ENCODE measurements at regions of chr7 and their contacts with region 1.

Region 1: GRCh38 chr7:100889761-100890634 is 483 bp upstream of the UFSP1 start:
- DNase-seq: peak; percentile 93
- H3K4me3 Mint-ChIP-seq: peak overlapping the region; percentile 72
- H3K27ac Mint-ChIP-seq: peak overlapping the region; percentile 62
- H3K4me1 Mint-ChIP-seq: peaks cover 50% of the 10 kb centered on the region
- H3K27me3 Mint-ChIP-seq: peaks cover 28% of the 10 kb centered on the region

Region 2: GRCh38 chr7:100380196-100380595 is 509.8 kb before region 1 on chr7:
- CTCF ChIA-PET with region 1: no interaction called
- POLR2A ChIA-PET with region 1: no interaction called
- DNase-seq: no peak
- H3K4me3 Mint-ChIP-seq: no peak overlapping the region
- H3K27ac Mint-ChIP-seq: no peak overlapping the region
- H3K4me1 Mint-ChIP-seq: peaks cover 1% of the 10 kb centered on the region
- H3K27me3 Mint-ChIP-seq: peaks cover 10% of the 10 kb centered on the region

Region 3: GRCh38 chr7:100604028-100604975 is 285.7 kb before region 1 on chr7:
- CTCF ChIA-PET with region 1: no interaction called
- POLR2A ChIA-PET with region 1: no interaction called
- DNase-seq: peak; percentile 79
- H3K4me3 Mint-ChIP-seq: peak overlapping the region; percentile 84
- H3K27ac Mint-ChIP-seq: peak overlapping the region; percentile 88
- H3K4me1 Mint-ChIP-seq: peaks cover 41% of the 10 kb centered on the region
- H3K27me3 Mint-ChIP-seq: peaks cover 2% of the 10 kb centered on the region

Region 4: GRCh38 chr7:100836812-100837098 is 53.2 kb before region 1 on chr7:
- CTCF ChIA-PET with region 1: no interaction called
- POLR2A ChIA-PET with region 1: no interaction called
- DNase-seq: no peak
- H3K4me3 Mint-ChIP-seq: peak overlapping the region; percentile 72
- H3K27ac Mint-ChIP-seq: peak overlapping the region; percentile 81
- H3K4me1 Mint-ChIP-seq: peaks cover 25% of the 10 kb centered on the region
- H3K27me3 Mint-ChIP-seq: peaks cover under 1% of the 10 kb centered on the region

Region 5: GRCh38 chr7:100874577-100875355 is 15.2 kb before region 1 on chr7 and contains the start of gene SRRT:
- CTCF ChIA-PET with region 1: interaction called, 23 read pairs
- POLR2A ChIA-PET with region 1: interaction called, 18 read pairs
- DNase-seq: peak; percentile 99
- H3K4me3 Mint-ChIP-seq: peak within 1 kb of the TSS; percentile 97
- H3K27ac Mint-ChIP-seq: peak within 1 kb of the TSS; percentile 95
- H3K4me1 Mint-ChIP-seq: peaks cover 60% of the 10 kb centered on the region
- H3K27me3 Mint-ChIP-seq: no peaks in the 10 kb centered on the region
- total RNA-seq, gene SRRT: 262 to 280 TPM

Region 6: DNA sequence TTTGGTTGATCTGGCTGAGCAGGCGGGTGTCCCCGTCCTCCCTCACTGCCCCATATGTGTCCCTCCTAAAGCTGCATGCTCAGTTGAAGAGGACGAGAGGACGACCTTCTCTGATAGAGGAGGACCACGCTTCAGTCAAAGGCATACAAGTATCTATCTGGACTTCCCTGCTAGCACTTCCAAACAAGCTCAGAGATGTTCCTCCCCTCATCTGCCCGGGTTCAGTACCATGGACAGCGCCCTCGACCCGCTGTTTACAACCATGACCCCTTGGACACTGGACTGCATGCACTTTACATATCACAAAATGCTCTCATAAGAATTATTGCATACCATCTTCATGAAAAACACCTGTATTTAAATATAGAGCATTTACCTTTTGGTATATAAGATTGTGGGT is 168.4 kb after region 1 on chr7:
- CTCF ChIA-PET with region 1: interaction called, 10 read pairs
- POLR2A ChIA-PET with region 1: interaction called, 4 read pairs
- DNase-seq: peak; percentile 65
- H3K4me3 Mint-ChIP-seq: no peak overlapping the region
- H3K27ac Mint-ChIP-seq: no peak overlapping the region
- H3K4me1 Mint-ChIP-seq: peaks cover 1% of the 10 kb centered on the region
- H3K27me3 Mint-ChIP-seq: peaks cover 22% of the 10 kb centered on the region

Measured in activated CD4-positive, alpha-beta T cell treated with anti-CD3 and anti-CD28 coated beads, Interleukin-2, amount 10 ng/mL, durations not matched to agents 7 days and 5 days (primary cell).